Thyroid gland (tissue), 4 donors: ENCODE measurements at regions of chr5 and their contacts with region 1.

Region 1: GRCh38 chr5:124741711-124742496 is 4.5 kb downstream of the ZNF608 start:
- DNase-seq: peak; percentile 57 to 61
- H3K4me3 ChIP-seq: peak overlapping the region in 1 of 3 donors; percentile 4
- H3K27ac ChIP-seq: peak overlapping the region; percentile 72 to 92 (median 91)
- H3K4me1 ChIP-seq: peaks cover 55 to 57% of the 10 kb centered on the region in 2 donors
- H3K27me3 ChIP-seq: no peaks in the 10 kb centered on the region
- CTCF ChIP-seq: no peak
- POLR2A ChIP-seq: peak in 1 of 2 donors; percentile 70

Region 2: DNA sequence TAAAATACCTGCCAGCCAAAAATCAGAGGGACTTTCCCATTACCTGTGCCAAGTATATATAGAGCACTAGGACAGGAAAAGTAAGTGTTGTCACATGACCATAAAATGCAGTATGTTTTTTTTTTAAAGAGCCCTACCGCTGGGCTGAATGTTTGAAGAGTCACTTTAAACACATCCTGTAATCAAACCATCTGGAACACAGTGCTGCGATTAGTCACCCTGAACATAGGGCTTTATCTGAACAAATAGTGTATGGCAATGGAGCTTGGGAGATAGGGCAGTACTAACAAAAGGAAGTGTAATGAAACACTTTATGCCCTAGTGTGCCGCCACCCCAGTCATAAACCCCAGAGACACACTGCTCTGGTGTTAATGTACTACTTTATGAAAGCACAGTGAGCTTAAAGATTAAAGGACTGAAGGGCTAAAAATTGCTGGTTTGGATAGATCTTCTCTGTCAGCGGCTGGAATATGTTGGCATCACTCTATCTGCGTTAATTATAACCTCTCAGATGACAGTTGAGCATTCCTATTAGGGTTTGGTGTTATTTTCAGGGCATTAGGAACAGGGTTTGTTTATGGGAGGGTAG is 85.9 kb before region 1 on chr5:
- intact Hi-C with region 1: loop called (anchors 5 kb)
- DNase-seq: peak; percentile 34 to 36
- H3K4me3 ChIP-seq: no peak overlapping the region
- H3K27ac ChIP-seq: peak overlapping the region in 2 of 3 donors; percentile 25 to 51
- H3K4me1 ChIP-seq: peaks cover 67 to 74% of the 10 kb centered on the region in 2 donors
- H3K27me3 ChIP-seq: no peaks in the 10 kb centered on the region
- CTCF ChIP-seq: peak in 1 of 6 experiments; percentile 5
- POLR2A ChIP-seq: peak in 1 of 2 donors; percentile 6

Region 3: DNA sequence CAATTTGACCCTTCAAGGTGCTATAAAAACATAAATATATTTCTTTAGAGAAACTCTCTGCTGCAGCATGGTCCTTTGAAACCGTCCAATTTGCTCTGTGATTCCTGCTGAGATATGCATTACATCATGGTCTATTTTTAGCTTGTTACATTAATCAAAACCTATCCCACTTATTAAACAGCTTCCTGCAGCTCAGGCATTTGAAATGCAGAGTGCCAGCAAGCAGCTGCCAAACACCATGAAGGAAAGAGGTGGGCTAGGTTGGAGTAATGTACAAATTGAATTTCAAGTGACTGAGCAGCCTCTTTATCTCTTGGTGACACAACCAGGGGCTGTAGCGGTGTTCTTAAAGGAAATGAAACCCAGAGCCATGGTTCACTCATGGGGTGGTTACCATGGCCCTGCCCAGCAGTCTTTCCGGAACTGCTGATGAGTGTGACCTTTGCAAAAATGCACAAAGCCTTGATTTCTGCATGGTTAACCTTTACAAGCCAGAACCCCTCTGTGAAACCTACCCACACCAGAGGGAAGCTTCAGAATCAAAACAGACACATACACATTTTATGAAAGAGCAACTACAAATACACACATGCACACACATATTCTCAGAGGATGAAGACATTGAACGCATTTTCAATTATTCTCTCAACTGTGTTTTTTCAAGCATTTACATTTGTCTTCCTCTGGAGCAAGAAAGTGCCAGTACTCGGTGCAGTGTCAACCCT is 160.4 kb after region 1 on chr5:
- intact Hi-C with region 1: no loop called
- DNase-seq: peak in 1 of 2 donors; percentile 1
- H3K4me3 ChIP-seq: no peak overlapping the region
- H3K27ac ChIP-seq: peak overlapping the region in 1 of 3 donors; percentile 26
- H3K4me1 ChIP-seq: peaks cover 28 to 33% of the 10 kb centered on the region in 2 donors
- H3K27me3 ChIP-seq: no peaks in the 10 kb centered on the region
- CTCF ChIP-seq: no peak
- POLR2A ChIP-seq: no peak